ENCODE measurements at regions of chr6 and their contacts with region 1.

Region 1: GRCh38 chr6:161370880-161371279 is 97.0 kb upstream of the AGPAT4 start:
- DNase-seq: peak; percentile 42 to 50
- ATAC-seq: peak in 5 of 8 donors; percentile 61 to 68 (median 62)
- H3K4me3 ChIP-seq: no peak overlapping the region
- H3K27ac ChIP-seq: no peak overlapping the region
- H3K4me1 ChIP-seq: peaks cover 0 to 12% (median 3%) of the 10 kb centered on the region in 9 donors
- H3K27me3 ChIP-seq: no peaks in the 10 kb centered on the region
- CTCF ChIP-seq: peak; percentile 71 to 92 (median 88)

Region 2: DNA sequence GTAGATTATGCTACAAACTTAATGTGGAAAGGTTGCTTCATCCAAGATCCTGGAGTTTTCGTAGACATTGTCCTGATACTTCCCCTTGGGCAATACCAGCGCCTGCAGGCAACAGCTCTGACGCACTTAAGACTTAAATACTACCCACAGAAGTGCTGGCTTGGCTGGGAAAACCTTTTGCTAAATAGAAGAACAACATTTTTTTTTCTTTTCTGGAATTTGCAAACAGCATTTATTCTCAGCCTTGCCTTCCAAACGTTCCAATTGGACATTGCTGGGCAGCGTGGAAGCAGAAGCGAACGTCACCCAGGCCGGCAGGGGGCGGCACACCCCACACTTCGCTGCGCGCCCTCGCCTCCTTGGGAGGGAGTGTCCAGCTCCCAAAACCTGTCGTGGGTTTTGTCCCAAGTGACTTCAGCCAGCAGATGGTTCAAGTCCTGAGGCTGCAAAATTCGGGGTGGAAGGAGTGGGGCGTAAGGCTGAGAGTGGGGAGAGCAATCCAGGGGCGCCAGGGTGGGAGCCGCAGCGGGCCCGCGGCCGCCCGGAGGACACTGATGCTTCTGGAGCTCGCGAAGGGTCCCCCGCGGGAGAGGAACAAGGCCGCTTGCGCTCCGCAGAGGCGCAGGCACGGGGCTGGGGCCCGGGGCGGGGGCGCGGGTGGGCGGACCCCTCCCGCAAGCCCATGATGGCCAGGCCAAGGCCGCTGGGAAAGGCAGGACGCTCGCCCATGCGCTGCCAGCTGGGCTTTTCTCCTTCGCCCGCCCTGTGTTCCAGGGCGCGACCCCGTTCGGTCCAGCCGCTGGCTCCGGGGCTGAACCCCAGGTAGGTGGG is 440.1 kb before region 1 on chr6:
- intact Hi-C with region 1: loop called (anchors 1 to 5 kb)
- DNase-seq: peak; percentile 72 to 83
- ATAC-seq: peak; percentile 91 to 97 (median 95)
- H3K4me3 ChIP-seq: peak overlapping the region; percentile 42 to 60 (median 56)
- H3K27ac ChIP-seq: peak overlapping the region in 2 of 10 donors; percentile 42 to 44
- H3K4me1 ChIP-seq: peaks cover 0 to 16% (median 7%) of the 10 kb centered on the region in 9 donors
- H3K27me3 ChIP-seq: peaks cover 0 to 24% (median 8%) of the 10 kb centered on the region in 7 donors
- CTCF ChIP-seq: peak; percentile 78 to 98 (median 91)

Region 3: GRCh38 chr6:161079566-161080262 is 291.2 kb before region 1 on chr6:
- intact Hi-C with region 1: no loop called
- DNase-seq: no peak
- ATAC-seq: peak in 3 of 8 donors; percentile 29 to 66 (median 47)
- H3K4me3 ChIP-seq: no peak overlapping the region
- H3K27ac ChIP-seq: peak overlapping the region in 1 of 10 donors; percentile 11
- H3K4me1 ChIP-seq: peaks cover 0 to 18% (median 4%) of the 10 kb centered on the region in 9 donors
- H3K27me3 ChIP-seq: no peaks in the 10 kb centered on the region
- CTCF ChIP-seq: no peak

Region 4: GRCh38 chr6:161111261-161111660 is 259.6 kb before region 1 on chr6:
- intact Hi-C with region 1: loop called in 1 of 10 experiments (anchors 10 kb)
- DNase-seq: no peak
- ATAC-seq: no peak
- H3K4me3 ChIP-seq: no peak overlapping the region
- H3K27ac ChIP-seq: peak overlapping the region in 1 of 10 donors; percentile 27
- H3K4me1 ChIP-seq: peaks cover 0 to 4% (median 0%) of the 10 kb centered on the region in 9 donors
- H3K27me3 ChIP-seq: no peaks in the 10 kb centered on the region
- CTCF ChIP-seq: no peak

Region 5: DNA sequence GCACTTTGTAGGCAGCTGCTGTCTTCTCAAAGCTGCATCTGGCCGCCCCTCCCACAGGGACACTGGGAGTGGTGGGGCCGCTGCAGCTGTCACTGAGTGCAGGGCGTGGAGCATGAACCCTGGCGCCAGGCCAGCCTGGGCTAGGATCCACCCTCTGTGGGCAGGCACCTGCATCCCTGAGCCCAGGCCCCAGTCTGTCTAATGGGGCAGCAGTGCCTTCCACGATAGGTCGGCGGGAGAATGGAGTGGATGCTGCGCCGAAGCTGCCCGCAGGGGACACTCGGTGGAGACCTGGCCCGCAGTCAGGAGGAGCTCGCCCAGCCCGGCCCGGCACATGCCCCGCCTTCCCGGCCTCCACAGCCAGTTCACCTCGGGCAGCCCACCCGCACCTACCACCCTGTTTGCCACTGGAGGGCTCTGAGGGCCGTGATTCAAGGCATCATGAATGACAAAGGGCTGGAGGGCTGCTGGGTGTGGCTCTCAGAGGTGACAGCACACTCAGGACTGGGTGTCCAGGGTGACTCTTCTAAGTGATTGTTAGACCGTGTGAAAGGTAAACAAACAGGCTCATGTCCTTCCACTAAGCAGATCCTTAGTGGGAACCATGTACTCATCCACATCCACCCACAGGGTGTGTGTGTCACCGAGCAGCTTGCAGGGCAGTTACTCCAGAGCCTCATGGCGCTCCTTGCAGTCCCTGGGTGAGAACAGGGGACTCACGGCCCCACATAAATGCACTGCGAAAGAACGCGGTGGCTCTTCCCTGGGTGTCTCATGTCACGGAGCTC is 230.9 kb before region 1 on chr6:
- intact Hi-C with region 1: loop called in 1 of 10 experiments (anchors 10 kb)
- DNase-seq: peak in 1 of 2 donors; percentile 43
- ATAC-seq: peak in 6 of 8 donors; percentile 15 to 50 (median 33)
- H3K4me3 ChIP-seq: no peak overlapping the region
- H3K27ac ChIP-seq: no peak overlapping the region
- H3K4me1 ChIP-seq: no peaks in the 10 kb centered on the region
- H3K27me3 ChIP-seq: no peaks in the 10 kb centered on the region
- CTCF ChIP-seq: peak in 1 of 9 donors; percentile 46

Measured in heart right ventricle (tissue), 16 donors.